Right lobe of liver (tissue), 6 donors: ENCODE measurements at regions of chr3 and their contacts with region 1.

Region 1: GRCh38 chr3:109275702-109276293 is 40.5 kb downstream of the DPPA2 start:
- DNase-seq: peak; percentile 50 to 70 (median 69)
- ATAC-seq: peak; percentile 96 to 98 (median 96)
- H3K4me3 ChIP-seq: no peak overlapping the region
- H3K27ac ChIP-seq: no peak overlapping the region
- H3K4me1 ChIP-seq: no peaks in the 10 kb centered on the region
- H3K27me3 ChIP-seq: no peaks in the 10 kb centered on the region
- CTCF ChIP-seq: peak; percentile 60 to 77 (median 70)
- POLR2A ChIP-seq: no peak

Region 2: DNA sequence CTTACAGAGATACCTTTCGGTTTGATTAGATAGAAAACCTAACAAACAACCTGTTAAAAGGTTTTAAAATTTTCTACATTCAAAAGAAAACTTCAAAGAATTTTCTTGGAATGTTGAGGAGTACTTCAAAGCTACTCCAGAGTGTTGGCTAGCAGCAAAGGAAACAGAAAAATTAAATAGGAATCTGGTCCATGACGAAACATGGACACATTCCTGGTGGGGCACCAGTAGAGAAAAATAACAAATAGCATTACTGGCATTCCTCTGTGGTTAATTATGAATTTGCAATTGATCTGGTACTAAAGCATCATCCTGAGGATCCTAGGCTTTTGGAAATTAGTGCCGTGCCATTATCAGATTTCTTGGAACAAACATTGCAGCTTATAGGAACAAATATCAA is 121.0 kb after region 1 on chr3:
- intact Hi-C with region 1: loop called (anchors 10 kb)
- DNase-seq: no peak
- ATAC-seq: no peak
- H3K4me3 ChIP-seq: no peak overlapping the region
- H3K27ac ChIP-seq: no peak overlapping the region
- H3K4me1 ChIP-seq: no peaks in the 10 kb centered on the region
- H3K27me3 ChIP-seq: no peaks in the 10 kb centered on the region
- CTCF ChIP-seq: no peak
- POLR2A ChIP-seq: no peak

Region 3: DNA sequence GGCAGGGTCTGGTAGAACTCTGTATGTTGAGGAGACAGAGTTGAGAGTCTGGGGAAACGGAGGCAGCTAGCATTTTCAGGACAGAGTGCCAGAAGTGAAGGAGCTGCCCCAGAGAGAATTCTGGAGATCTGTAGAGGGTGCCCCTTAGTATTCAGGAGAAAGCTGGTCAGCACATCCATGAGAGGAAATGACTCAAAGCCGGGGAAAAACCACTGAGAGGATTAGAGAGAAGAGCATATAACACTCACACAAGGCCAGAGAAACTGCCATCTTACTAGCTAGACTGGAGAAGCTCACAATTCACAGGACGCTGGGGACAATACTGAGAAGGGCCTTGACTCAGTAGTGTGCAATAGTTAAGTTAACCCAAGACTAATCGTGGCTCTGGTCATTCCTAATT is 137.3 kb after region 1 on chr3:
- intact Hi-C with region 1: loop called in 1 of 2 experiments (anchors 10 kb)
- DNase-seq: no peak
- ATAC-seq: no peak
- H3K4me3 ChIP-seq: no peak overlapping the region
- H3K27ac ChIP-seq: no peak overlapping the region
- H3K4me1 ChIP-seq: no peaks in the 10 kb centered on the region
- H3K27me3 ChIP-seq: no peaks in the 10 kb centered on the region
- CTCF ChIP-seq: no peak
- POLR2A ChIP-seq: no peak